Right ventricle myocardium inferior (tissue), 1 donor: ENCODE measurements at regions of chr9 and their contacts with region 1.

Region 1: DNA sequence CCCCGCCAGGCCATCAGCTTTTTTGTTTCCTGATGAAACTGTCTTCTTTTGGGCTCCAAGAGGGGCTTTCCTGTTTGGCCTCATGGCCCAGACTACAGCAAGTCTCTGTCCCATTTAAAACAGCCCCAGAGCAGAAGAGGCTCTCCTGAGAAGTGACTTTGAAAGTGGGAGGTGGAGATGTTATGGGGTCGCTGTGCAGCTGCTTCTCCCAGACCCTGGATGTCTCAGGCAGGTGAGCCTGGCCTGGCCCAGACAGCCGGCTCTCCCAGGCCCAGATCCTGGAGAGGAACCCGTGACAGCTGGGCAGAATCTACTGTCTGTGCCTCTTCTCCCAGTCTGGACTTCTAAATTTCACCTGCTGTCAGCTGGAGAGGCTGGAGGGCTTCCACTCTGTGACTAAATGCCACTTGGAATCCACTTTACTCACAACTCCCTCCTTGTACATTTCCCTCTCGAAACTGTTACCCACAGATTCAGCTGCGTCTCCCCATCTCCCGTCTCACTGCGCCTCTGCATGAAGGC is 20.6 kb downstream of the FAM78A start:
- DNase-seq: peak; percentile 39
- ATAC-seq: no peak

Region 2: DNA sequence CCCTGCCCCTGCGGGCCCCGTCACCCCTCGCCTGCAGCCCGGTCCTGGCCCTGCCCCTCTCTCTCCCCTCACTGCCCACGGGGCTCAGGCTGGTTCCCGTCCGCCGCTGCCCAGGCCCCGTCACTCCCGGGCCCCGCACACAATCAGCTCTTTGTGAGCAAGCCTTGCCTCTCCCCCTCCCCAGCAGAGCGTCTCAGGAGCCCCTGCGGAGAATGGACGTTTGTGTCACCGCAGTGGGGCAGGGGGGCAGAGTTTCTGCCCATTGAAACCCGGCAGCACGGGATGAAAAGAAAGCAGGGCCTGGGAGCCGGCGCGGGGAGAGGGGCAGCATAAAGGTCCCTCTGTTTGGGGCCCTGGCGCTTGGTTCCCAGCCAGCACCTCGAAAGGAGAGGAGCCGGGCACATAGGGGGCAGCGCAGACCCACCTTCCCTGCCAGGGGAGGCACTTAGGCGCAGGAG is 143.9 kb before region 1 on chr9:
- intact Hi-C with region 1: no loop called
- DNase-seq: no peak
- ATAC-seq: no peak

Region 3: DNA sequence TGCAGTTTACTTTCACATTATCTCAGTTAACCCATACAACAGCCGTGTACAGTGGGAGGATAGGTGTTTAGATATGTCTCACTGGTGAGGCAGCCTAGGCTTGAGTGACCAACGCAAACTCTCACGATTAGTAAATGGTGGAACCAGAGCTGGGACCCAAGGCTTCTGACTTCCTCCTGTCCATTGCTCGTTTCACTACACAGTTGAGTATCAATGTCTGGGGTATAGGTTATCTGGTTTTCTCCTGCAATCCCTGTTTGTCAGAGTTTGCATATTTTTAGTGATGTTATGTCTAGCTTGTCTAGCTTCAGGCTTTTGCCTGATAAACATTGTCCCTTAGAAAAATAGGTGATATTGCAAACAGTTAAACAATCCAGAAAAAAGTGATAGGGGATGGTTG is 67.8 kb before region 1 on chr9:
- intact Hi-C with region 1: no loop called
- DNase-seq: no peak
- ATAC-seq: no peak

Region 4: DNA sequence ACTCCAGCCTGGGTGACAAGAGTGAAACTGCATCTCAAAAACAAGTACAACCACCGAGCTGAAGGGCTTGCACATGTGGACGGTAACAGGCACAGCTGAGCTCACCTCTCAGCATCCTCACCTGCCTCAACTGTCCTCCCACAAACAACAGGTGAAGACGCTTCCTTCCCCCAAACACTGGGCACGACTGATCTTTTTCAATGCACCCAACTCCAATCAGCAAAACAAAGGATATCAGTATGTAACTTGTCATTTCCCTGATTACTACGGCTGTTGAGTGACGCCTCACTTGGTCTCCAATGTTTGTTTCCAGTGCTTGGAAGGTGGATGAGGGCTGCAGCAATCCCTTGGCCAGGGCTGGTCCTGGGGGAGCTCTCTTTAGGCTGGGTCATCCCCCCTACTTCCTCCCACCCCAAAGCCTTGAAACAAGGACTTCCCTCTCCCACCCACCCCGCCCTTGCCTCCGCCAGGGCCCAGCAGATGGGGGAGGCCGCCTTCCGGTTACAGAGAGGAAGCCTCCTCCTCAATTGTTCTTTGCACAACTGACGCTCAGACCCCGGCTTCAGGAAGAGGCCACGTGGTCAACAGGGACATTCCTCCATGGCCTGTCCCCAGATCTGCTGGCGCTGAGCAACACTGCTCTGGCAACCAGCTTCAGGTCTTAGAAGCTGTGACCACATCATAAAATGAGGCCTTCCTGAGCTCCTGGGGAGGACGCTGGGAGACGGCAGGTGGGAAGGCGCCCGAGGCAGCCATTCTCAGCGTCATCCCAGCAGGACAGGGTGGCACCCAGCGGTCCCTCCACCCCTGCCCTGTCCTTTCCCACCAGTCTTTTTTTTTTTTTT is 14.7 kb after region 1 on chr9:
- intact Hi-C with region 1: loop called (anchors 1 kb)
- DNase-seq: peak; percentile 92
- ATAC-seq: peak; percentile 67

Region 5: GRCh38 chr9:131382850-131383729 is 127.4 kb after region 1 on chr9:
- intact Hi-C with region 1: no loop called
- DNase-seq: no peak
- ATAC-seq: peak; percentile 97

Region 6: DNA sequence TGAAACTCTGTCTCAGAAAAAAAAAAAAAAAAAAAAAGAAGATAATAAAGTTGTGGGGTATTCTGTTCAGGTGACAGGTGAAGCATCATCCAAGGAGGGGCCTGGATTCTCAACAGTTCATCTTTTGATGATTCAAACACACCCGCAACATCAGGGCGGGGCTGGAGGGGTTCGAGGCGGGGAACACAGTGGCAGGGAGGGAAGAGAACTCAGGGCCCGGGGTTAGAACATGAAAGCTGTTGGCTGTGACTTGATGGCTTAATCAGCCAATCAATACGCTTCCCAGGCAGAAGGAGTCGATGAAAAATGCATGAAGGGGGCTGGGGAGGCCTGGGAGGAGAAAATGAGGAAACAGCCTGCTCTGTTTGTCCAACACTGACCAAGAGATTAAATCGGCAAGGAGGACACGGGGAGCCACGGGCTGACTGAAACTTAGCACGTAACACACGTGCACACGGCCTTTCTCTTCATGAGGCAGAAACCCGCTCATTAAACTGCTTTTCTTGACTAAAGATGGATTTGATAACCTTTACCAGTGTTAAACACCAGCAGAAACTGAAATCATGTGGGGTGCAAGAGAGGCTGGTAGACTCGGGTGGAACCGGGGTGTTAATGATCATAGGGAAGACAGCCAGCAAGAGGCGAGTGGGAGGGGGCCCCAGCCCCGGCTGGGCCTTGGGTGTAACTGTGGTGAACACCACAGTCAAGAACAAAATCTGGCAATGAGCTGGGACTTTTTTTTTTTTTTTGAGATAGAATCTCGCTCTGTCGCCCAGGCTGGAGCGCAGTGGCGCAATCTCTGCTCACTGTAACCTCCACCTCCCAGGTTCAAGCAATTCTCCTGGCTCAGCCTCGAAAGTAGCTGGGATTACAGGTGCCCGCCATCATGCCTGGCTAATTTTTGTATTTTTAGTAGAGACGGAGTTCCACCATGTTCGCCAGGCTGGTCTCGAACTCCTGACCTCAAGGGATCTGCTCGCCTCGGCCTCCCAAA is 589.9 kb after region 1 on chr9:
- intact Hi-C with region 1: no loop called
- DNase-seq: no peak
- ATAC-seq: no peak